PC-3 (cell line): ENCODE measurements at regions of chr3 and their contacts with region 1.

Region 1: GRCh38 chr3:4978204-4978965 is 852 bp upstream of the BHLHE40 start:
- DNase-seq: peak; percentile 98
- ATAC-seq: peak; percentile 65
- H3K4me3 ChIP-seq: peak overlapping the region; percentile 69
- H3K27ac ChIP-seq: peak overlapping the region; percentile 95
- H3K4me1 ChIP-seq: peaks cover 29% of the 10 kb centered on the region
- H3K27me3 ChIP-seq: no peaks in the 10 kb centered on the region
- CTCF ChIP-seq: no peak

Region 2: DNA sequence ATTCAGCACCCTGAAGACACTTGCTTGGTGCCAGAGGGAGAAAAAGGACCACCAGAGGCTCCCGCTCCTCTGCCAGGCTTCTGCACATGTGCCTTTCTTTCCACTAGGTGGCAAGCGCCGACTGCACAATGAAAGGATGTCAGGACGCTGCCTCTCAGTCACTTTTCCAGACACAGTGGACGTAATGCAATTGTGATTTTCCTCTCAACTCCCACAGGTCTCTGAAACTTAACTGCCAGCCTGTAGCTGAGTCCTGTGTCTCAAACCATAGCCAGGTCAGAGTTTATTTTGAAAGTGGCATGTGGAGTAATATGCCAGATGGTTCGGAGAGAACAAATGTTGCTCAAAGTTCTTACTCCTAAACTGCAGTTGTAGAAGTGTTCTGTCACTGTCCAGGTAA is 322.3 kb before region 1 on chr3:
- CTCF ChIA-PET with region 1: interaction called, 5 read pairs
- POLR2A ChIA-PET with region 1: no interaction called
- intact Hi-C with region 1: loop called (anchors 5 kb)
- DNase-seq: peak; percentile 83
- ATAC-seq: peak; percentile 98
- H3K4me3 ChIP-seq: no peak overlapping the region
- H3K27ac ChIP-seq: no peak overlapping the region
- H3K4me1 ChIP-seq: peaks cover 4% of the 10 kb centered on the region
- H3K27me3 ChIP-seq: no peaks in the 10 kb centered on the region
- CTCF ChIP-seq: peak; percentile 98

Region 3: DNA sequence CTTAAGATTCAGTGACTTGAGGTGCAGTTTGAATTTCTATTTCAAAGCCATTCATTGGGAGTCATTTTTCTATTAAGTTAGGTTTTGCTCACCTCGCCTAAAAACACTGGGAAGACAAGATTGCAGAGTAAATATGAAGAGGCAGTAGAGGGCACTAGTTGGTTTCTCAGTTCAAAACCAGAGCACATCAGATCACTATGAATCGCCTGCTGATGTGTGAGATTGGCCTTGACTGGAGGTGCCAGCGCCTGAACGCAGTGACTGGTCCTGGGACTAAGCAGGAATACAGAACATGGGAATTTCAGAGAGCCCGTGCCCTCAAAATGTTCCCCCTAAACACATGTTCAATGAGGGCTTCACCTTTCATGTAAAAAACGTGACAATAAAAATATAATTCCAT is 256.3 kb before region 1 on chr3:
- CTCF ChIA-PET with region 1: interaction called, 15 read pairs
- POLR2A ChIA-PET with region 1: interaction called, 4 read pairs
- intact Hi-C with region 1: loop called (anchors 1 kb)
- DNase-seq: peak; percentile 78
- ATAC-seq: peak; percentile 75
- H3K4me3 ChIP-seq: no peak overlapping the region
- H3K27ac ChIP-seq: peak overlapping the region; percentile 44
- H3K4me1 ChIP-seq: peaks cover 35% of the 10 kb centered on the region
- H3K27me3 ChIP-seq: no peaks in the 10 kb centered on the region
- CTCF ChIP-seq: peak; percentile 82

Region 4: GRCh38 chr3:4831580-4831950 is 146.8 kb before region 1 on chr3:
- CTCF ChIA-PET with region 1: no interaction called
- POLR2A ChIA-PET with region 1: interaction called, 5 read pairs
- intact Hi-C with region 1: loop called (anchors 1 kb)
- DNase-seq: no peak
- ATAC-seq: no peak
- H3K4me3 ChIP-seq: no peak overlapping the region
- H3K27ac ChIP-seq: peak overlapping the region; percentile 74
- H3K4me1 ChIP-seq: peaks cover 30% of the 10 kb centered on the region
- H3K27me3 ChIP-seq: no peaks in the 10 kb centered on the region
- CTCF ChIP-seq: no peak

Region 5: GRCh38 chr3:4939276-4939675 is 39.1 kb before region 1 on chr3:
- CTCF ChIA-PET with region 1: interaction called, 11 read pairs
- POLR2A ChIA-PET with region 1: no interaction called
- intact Hi-C with region 1: no loop called
- DNase-seq: no peak
- ATAC-seq: no peak
- H3K4me3 ChIP-seq: no peak overlapping the region
- H3K27ac ChIP-seq: no peak overlapping the region
- H3K4me1 ChIP-seq: peaks cover 20% of the 10 kb centered on the region
- H3K27me3 ChIP-seq: no peaks in the 10 kb centered on the region
- CTCF ChIP-seq: no peak

Region 6: GRCh38 chr3:4994823-4995499 is 16.6 kb after region 1 on chr3:
- CTCF ChIA-PET with region 1: interaction called, 3 read pairs
- POLR2A ChIA-PET with region 1: interaction called, 16 read pairs
- intact Hi-C with region 1: no loop called
- DNase-seq: peak; percentile 92
- ATAC-seq: peak; percentile 81
- H3K4me3 ChIP-seq: no peak overlapping the region
- H3K27ac ChIP-seq: peak overlapping the region; percentile 97
- H3K4me1 ChIP-seq: peaks cover 53% of the 10 kb centered on the region
- H3K27me3 ChIP-seq: no peaks in the 10 kb centered on the region
- CTCF ChIP-seq: no peak

Region 7: DNA sequence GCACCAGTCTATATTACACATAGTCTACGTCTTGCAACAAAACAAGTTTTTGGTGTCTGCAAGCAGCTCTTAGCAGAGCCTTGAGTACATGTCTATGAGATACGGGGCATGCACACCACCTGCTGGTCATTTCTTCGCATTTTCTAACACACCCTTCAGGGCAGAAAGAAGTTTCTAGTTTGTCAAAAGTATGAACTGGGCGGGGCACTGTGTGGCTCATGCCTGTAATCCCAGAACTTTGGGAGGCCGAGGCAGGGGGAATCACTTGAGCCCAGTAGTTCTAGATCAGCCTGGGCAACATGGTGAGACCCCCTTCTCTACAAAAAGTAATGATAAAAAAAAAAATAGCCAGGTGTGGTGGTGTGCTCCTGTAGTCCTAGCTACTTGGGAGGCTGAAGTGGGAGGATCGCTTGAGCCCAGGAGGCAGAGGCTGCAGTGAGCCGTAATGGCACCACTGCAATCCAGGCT is 79.5 kb after region 1 on chr3:
- CTCF ChIA-PET with region 1: interaction called, 3 read pairs
- POLR2A ChIA-PET with region 1: interaction called, 6 read pairs
- intact Hi-C with region 1: loop called (anchors 1 kb)
- DNase-seq: peak; percentile 95
- ATAC-seq: peak; percentile 98
- H3K4me3 ChIP-seq: no peak overlapping the region
- H3K27ac ChIP-seq: peak overlapping the region; percentile 27
- H3K4me1 ChIP-seq: peaks cover 16% of the 10 kb centered on the region
- H3K27me3 ChIP-seq: no peaks in the 10 kb centered on the region
- CTCF ChIP-seq: peak; percentile 85

Region 8: GRCh38 chr3:5095879-5096278 is 117.5 kb after region 1 on chr3:
- CTCF ChIA-PET with region 1: no interaction called
- POLR2A ChIA-PET with region 1: no interaction called
- intact Hi-C with region 1: no loop called
- DNase-seq: no peak
- ATAC-seq: no peak
- H3K4me3 ChIP-seq: no peak overlapping the region
- H3K27ac ChIP-seq: no peak overlapping the region
- H3K4me1 ChIP-seq: peaks cover 7% of the 10 kb centered on the region
- H3K27me3 ChIP-seq: no peaks in the 10 kb centered on the region
- CTCF ChIP-seq: no peak